ENCODE measurements at regions of chr1 and their contacts with region 1.

Region 1: GRCh38 chr1:54406339-54407153 is at the start of gene SSBP3:
- DNase-seq: peak; percentile 92 to 93 (median 92)
- ATAC-seq: peak; percentile 95
- H3K4me3 ChIP-seq: peak within 1 kb of the TSS; percentile 86 to 93
- H3K27ac ChIP-seq: peak within 1 kb of the TSS; percentile 84 to 95 (median 92)
- H3K4me1 ChIP-seq: peaks cover 48% of the 10 kb centered on the region
- H3K27me3 ChIP-seq: no peaks in the 10 kb centered on the region
- CTCF ChIP-seq: peak in 3 of 7 experiments; percentile 17 to 32 (median 24)
- POLR2A ChIP-seq: peak; percentile 70 to 89 (median 78)
- total RNA-seq, gene SSBP3: 7.9 to 23.1 TPM

Region 2: GRCh38 chr1:54121482-54122134 is 284.9 kb before region 1 on chr1:
- intact Hi-C with region 1: loop called (anchors 10 kb)
- DNase-seq: peak; percentile 81 to 87 (median 85)
- ATAC-seq: peak; percentile 70
- H3K4me3 ChIP-seq: no peak overlapping the region
- H3K27ac ChIP-seq: peak overlapping the region in 3 of 4 donors; percentile 1 to 72 (median 46)
- H3K4me1 ChIP-seq: peaks cover 45% of the 10 kb centered on the region
- H3K27me3 ChIP-seq: no peaks in the 10 kb centered on the region
- CTCF ChIP-seq: peak; percentile 71 to 88 (median 81)
- POLR2A ChIP-seq: peak in 2 of 3 donors; percentile 43 to 61

Region 3: DNA sequence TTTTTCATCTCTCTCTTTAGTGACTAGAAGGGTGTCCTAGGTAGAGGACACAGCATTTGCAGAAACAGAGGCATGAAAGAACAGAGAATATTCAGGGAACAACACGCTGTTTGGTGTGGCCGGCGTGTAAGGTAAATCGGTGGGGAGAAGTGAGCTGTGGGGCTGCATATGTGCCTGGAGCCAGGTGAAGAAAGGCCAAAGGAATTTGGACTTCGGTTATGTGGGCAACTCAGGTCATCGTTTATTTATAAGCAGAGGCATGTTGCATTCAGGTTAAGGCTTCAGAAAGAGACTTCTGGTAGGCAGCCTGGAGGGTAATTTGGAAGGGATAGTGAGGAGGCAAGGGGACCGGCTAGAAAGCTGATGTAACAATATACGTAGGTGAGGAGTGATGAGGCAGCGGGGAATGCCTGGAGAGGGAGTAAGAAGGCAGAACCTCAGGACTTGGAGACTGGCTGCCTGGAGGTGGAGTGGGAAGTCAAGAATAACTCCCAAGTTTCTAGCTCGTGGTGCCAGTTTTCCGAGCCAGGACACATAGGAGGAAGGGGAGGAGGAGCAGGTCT is 77.4 kb after region 1 on chr1:
- intact Hi-C with region 1: loop called (anchors 2 kb)
- DNase-seq: no peak
- ATAC-seq: no peak
- H3K4me3 ChIP-seq: no peak overlapping the region
- H3K27ac ChIP-seq: no peak overlapping the region
- H3K4me1 ChIP-seq: peaks cover 12% of the 10 kb centered on the region
- H3K27me3 ChIP-seq: no peaks in the 10 kb centered on the region
- CTCF ChIP-seq: no peak
- POLR2A ChIP-seq: no peak

Region 4: DNA sequence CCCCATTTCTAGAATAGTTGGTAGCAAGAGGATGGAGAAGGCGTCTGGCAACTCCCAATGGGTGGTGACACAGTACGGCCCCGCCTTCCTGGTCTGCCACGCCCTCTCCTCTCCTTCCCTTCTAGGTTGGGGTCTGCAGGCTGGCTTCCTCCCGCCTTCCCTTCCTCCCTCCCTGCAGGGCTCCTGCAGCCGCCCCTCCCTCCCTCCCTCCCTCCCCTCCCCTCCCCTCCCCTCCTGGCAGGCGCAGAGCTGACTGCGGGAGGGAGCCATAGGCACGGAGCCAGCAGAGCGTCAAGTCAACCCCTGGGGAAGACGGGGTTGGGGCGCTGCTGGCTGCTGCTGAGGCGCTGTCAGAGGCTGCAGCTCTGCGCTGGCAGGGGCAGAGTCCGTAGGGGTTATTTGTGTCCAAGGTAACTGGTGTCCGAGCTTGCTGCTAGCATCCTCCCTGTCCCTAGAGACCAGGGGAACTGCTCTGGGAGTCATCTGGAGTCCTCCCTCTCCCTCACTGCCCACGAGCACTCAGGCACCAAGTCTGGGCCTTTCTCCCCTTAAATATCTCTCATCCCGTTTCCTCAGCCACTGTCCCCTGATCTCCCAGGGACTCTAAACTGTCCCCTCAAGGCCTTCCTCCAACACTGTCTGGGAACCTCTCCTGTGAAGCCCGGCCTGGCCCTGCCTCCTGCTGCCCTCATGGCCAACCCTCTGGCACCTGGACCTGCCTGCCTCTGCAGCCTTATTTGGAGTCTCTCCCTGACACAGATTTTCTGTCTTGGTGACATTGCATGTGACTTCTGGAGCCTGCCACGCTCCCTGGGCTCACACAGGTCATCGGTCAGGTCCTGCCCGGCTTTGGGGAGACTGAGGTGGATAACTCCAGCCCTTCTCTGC is 84.1 kb after region 1 on chr1:
- intact Hi-C with region 1: loop called (anchors 5 kb)
- DNase-seq: peak in 3 of 4 donors; percentile 24 to 43 (median 32)
- ATAC-seq: no peak
- H3K4me3 ChIP-seq: no peak overlapping the region
- H3K27ac ChIP-seq: no peak overlapping the region
- H3K4me1 ChIP-seq: peaks cover 20% of the 10 kb centered on the region
- H3K27me3 ChIP-seq: no peaks in the 10 kb centered on the region
- CTCF ChIP-seq: no peak
- POLR2A ChIP-seq: no peak

Measured in body of pancreas (tissue), 4 donors.